Activated CD4-positive, alpha-beta T cell treated with anti-CD3 and anti-CD28 coated beads, Interleukin-2, amount 10 ng/mL, durations not matched to agents 24 days and 14 days (primary cell): ENCODE measurements at regions of chr2 and their contacts with region 1.

Region 1: DNA sequence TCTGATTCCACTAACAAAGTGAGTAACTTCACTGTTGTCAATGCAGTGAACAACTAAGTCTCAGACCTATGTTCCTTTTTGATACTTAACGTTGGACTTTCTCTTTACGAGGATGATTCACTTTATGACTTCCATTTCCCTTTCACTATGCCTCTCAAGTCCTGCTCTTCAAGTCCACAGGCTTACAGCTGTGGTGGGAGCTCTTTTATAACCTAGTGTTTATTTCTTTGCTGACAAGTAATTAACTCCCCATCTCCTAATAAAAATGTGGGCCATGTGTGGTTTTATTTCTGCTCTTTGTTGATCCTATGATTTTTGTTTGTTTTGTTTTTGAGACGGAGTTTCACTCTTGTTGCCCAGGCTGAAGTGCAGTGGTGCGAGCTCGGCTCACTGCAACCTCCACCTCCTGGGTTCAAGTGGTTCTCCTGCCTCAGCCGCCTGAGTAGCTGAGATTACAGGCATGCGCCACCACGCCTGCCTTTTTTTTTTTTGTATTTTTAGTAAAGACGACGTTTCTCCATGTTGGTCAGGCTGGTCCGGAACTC is 142.1 kb downstream of the USP34 start:
- DNase-seq: peak; percentile 54
- H3K4me3 Mint-ChIP-seq: peak overlapping the region; percentile 53
- H3K27ac Mint-ChIP-seq: peak overlapping the region; percentile 78
- H3K4me1 Mint-ChIP-seq: peaks cover 19% of the 10 kb centered on the region
- H3K27me3 Mint-ChIP-seq: no peaks in the 10 kb centered on the region

Region 2: DNA sequence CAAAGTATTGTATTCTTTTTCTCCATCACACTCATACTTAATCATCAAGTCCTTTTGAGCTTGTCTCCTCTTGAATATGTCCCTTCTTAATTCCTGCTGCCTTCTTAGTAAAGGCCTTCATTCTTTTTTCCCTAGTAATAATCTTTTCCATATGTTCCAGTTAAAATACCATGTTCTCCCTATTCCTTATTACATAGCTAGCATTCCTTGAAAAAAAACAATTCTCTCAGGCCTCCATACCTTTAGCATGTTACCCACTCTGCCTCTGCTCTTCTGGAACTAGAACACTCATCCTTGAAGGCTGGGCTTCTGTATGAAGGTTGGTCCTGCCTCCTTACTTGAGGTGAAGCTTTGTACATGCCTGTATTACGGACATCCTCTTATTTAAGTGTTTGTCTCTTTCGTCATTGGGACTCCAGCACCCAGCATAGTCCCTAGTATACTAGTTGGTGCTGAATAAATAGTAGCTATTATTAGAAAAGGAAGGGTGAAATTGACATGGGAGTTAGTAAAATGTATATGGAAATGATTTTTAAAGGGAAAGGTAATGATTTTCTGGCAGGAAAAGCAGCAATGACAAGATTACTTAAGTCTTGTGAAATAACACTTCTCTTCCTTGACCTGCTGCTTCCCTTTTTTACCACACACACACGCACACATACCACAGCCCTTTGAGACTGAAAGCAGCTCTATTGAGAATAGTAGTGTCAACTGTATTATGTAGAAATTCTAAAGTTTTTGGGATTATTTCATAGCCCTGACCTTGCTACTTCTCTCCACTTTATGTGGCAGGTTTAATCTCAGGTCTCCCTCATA is 401.8 kb before region 1 on chr2:
- intact Hi-C with region 1: no loop called
- DNase-seq: no peak
- H3K4me3 Mint-ChIP-seq: no peak overlapping the region
- H3K27ac Mint-ChIP-seq: peak overlapping the region; percentile 2
- H3K4me1 Mint-ChIP-seq: peaks cover 13% of the 10 kb centered on the region
- H3K27me3 Mint-ChIP-seq: no peaks in the 10 kb centered on the region

Region 3: GRCh38 chr2:61470965-61471904 is 142.5 kb after region 1 on chr2 and contains the start of gene USP34:
- intact Hi-C with region 1: loop called (anchors 5 kb)
- DNase-seq: peak; percentile 96
- H3K4me3 Mint-ChIP-seq: peak within 1 kb of the TSS; percentile 98
- H3K27ac Mint-ChIP-seq: peak within 1 kb of the TSS; percentile 98
- H3K4me1 Mint-ChIP-seq: peaks cover 19% of the 10 kb centered on the region
- H3K27me3 Mint-ChIP-seq: no peaks in the 10 kb centered on the region
- total RNA-seq, gene USP34: 84.3 and 93.8 TPM in 2 replicates